ENCODE measurements at regions of chr12 and their contacts with region 1.

Region 1: DNA sequence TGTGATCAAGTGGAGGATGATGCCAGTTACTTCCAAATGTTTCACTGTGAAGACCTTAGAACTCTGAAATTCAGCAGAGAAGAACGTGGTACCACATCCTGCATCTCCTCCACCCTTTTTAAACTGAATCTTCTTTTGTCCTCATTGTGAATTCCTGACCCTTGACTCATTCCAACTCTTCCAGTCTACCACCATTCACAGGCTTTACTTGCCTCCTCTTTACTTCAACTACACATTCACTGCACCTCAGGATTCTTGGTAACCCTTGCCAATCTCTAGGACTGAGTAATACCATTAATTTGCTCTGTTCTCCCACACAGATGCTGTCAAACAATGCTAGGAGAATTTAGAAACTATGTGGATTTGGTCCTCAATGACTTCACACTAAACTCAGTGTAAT is 37.3 kb downstream of the PPP1R12A start:
- DNase-seq: no peak
- H3K4me3 ChIP-seq: no peak overlapping the region
- H3K4me3 Mint-ChIP-seq: no peak overlapping the region
- H3K27ac Mint-ChIP-seq: peak overlapping the region; percentile 9
- H3K4me1 ChIP-seq: no peaks in the 10 kb centered on the region
- H3K4me1 Mint-ChIP-seq: peaks cover 19% of the 10 kb centered on the region
- H3K27me3 ChIP-seq: no peaks in the 10 kb centered on the region
- H3K27me3 Mint-ChIP-seq: no peaks in the 10 kb centered on the region
- CTCF ChIP-seq: no peak

Region 2: GRCh38 chr12:79881351-79881750 is 16.3 kb before region 1 on chr12:
- CTCF ChIA-PET with region 1: interaction called, 3 read pairs
- POLR2A ChIA-PET with region 1: interaction called, 12 read pairs
- intact Hi-C with region 1: no loop called
- DNase-seq: no peak
- H3K4me3 ChIP-seq: no peak overlapping the region
- H3K4me3 Mint-ChIP-seq: no peak overlapping the region
- H3K27ac Mint-ChIP-seq: no peak overlapping the region
- H3K4me1 ChIP-seq: no peaks in the 10 kb centered on the region
- H3K4me1 Mint-ChIP-seq: no peaks in the 10 kb centered on the region
- H3K27me3 ChIP-seq: no peaks in the 10 kb centered on the region
- H3K27me3 Mint-ChIP-seq: no peaks in the 10 kb centered on the region
- CTCF ChIP-seq: no peak